ENCODE measurements at regions of chr12 and their contacts with region 1.

Region 1: GRCh38 chr12:85951823-85952222 is 77.7 kb downstream of the NTS start:
- DNase-seq: no peak
- H3K4me3 Mint-ChIP-seq: no peak overlapping the region
- H3K27ac Mint-ChIP-seq: no peak overlapping the region
- H3K4me1 Mint-ChIP-seq: no peaks in the 10 kb centered on the region
- H3K27me3 Mint-ChIP-seq: no peaks in the 10 kb centered on the region
- CTCF ChIP-seq: peak; percentile 61

Region 2: DNA sequence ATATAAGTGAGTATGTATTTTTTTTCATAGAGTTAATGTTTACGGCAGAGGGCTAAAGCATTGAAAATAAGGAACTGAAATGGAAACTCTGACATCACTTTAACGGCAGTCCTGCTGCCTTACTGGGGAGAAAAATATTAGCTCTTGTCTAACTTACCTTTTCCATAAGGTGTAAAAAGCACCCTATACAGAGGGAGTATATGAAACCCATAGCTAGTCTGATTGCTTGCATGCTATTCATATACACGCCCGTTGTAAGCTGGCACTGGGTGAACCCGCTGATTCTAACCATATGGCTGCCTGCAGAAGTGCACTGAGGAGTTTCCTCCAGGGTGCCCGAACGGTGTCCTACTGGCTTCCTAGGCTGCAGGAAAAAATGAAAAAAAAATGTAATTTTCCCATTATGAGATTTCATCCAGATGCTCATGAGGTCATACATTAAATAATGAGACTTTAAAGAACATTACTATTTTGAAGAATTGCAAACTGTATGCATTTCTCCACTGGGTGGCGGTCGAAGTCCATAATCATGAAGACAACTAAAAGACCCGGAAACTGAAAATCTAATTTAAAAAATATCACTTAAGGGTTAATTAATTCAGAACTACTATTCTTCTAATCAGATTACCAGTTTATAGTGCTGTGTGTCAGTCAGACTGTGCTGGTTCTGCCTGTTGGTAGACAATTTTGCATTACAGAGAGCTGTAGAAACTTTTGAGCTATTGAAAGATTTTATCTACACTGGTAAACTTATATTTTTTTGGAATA is 527.1 kb before region 1 on chr12:
- CTCF ChIA-PET with region 1: interaction called, 4 read pairs
- intact Hi-C with region 1: loop called (anchors 1 kb)
- DNase-seq: peak; percentile 51
- H3K4me3 Mint-ChIP-seq: no peak overlapping the region
- H3K27ac Mint-ChIP-seq: no peak overlapping the region
- H3K4me1 Mint-ChIP-seq: no peaks in the 10 kb centered on the region
- H3K27me3 Mint-ChIP-seq: no peaks in the 10 kb centered on the region
- CTCF ChIP-seq: peak; percentile 56

Region 3: DNA sequence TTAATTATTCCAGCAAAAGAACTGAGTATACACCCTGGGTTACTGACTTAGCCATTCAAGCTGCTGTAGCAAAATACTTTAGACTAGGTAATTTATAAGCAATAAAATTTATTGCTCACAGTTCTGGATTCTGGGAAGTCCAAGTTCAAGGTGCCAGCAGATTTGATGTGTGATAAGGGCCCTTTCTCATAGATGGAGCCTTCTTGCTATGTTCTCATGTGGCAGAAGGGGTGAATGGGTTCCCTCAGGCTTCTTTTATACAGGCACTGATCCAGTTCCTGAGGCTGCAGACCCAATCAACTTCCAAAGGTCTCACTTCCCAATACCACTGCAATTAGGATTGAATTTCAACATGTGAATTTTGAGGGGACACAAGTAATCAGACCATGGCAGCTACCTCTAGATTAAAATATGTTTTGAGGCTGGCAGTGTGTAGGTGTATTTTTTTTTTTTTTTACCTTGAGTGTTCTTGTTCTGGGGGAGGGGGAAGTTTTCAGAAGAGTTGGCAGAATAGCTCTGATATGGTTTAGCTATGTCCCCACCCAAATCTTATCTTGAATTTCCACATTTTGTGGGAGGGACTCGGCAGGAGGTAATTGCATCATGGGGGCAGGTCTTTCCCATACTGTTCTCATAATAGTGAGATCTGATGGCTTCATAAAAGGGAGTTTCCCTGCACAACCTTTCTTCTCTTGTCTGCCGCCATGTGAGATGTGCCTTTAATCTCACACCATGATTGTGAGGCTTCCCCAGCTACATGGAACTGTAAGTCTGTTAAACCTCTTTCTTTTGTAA is 293.8 kb before region 1 on chr12:
- CTCF ChIA-PET with region 1: no interaction called
- intact Hi-C with region 1: no loop called
- DNase-seq: no peak
- H3K4me3 Mint-ChIP-seq: no peak overlapping the region
- H3K27ac Mint-ChIP-seq: no peak overlapping the region
- H3K4me1 Mint-ChIP-seq: no peaks in the 10 kb centered on the region
- H3K27me3 Mint-ChIP-seq: no peaks in the 10 kb centered on the region
- CTCF ChIP-seq: no peak

Region 4: DNA sequence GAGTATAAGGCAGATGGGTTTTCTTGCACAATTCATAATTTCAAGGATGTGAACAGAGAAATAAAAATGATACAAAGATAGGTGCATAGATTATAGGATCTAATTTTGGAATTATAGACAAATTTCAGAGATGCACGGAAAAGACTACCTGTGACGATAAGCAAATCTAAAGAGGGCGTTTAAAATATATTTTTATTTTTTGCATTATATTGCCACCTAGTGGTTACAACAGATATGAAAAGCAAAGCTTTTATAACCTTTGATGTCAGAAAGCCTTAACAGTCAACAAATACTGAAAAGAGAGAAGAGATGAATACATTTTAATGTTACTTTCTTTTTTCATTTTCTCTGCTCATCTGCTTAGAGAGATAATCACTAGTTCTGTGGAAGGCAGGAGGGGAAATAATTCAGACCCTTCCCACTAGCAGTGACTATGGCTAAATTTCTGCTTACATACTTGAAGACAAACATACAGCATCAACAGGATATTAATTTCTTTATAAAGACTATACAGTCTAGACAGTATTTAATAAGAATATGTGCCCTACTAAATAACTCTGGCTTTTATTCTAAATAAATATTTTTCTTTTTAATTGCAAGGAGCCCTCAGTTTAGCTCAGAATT is 31.4 kb before region 1 on chr12:
- CTCF ChIA-PET with region 1: interaction called, 3 read pairs
- intact Hi-C with region 1: loop called (anchors 1 kb)
- DNase-seq: no peak
- H3K4me3 Mint-ChIP-seq: no peak overlapping the region
- H3K27ac Mint-ChIP-seq: no peak overlapping the region
- H3K4me1 Mint-ChIP-seq: no peaks in the 10 kb centered on the region
- H3K27me3 Mint-ChIP-seq: no peaks in the 10 kb centered on the region
- CTCF ChIP-seq: peak; percentile 45

Region 5: GRCh38 chr12:86015019-86015418 is 63.2 kb after region 1 on chr12:
- CTCF ChIA-PET with region 1: no interaction called
- intact Hi-C with region 1: no loop called
- DNase-seq: no peak
- H3K4me3 Mint-ChIP-seq: no peak overlapping the region
- H3K27ac Mint-ChIP-seq: no peak overlapping the region
- H3K4me1 Mint-ChIP-seq: no peaks in the 10 kb centered on the region
- H3K27me3 Mint-ChIP-seq: no peaks in the 10 kb centered on the region
- CTCF ChIP-seq: no peak

Region 6: DNA sequence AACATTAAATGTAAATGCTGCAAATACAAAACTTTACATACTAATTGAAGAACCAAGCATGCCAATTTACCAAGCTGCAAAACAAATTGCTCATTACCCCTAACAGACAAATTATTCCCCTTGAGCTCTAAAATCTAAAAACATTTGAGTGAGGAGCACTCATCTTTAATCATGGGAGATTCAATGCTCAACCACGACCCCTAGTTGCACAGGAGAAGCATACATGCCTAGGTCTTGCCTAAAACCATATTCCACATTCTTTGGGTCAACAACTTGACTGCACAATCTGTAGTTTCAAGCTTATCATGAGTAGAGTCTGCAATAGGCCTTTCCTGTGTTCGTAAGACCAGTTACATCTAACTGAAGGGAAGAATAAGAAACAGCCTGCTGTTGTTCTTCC is 234.6 kb after region 1 on chr12:
- CTCF ChIA-PET with region 1: no interaction called
- intact Hi-C with region 1: loop called (anchors 5 kb)
- DNase-seq: peak; percentile 14
- H3K4me3 Mint-ChIP-seq: no peak overlapping the region
- H3K27ac Mint-ChIP-seq: no peak overlapping the region
- H3K4me1 Mint-ChIP-seq: no peaks in the 10 kb centered on the region
- H3K27me3 Mint-ChIP-seq: no peaks in the 10 kb centered on the region
- CTCF ChIP-seq: no peak

Region 7: GRCh38 chr12:86249851-86250250 is 298.0 kb after region 1 on chr12:
- CTCF ChIA-PET with region 1: no interaction called
- intact Hi-C with region 1: loop called (anchors 5 kb)
- DNase-seq: no peak
- H3K4me3 Mint-ChIP-seq: no peak overlapping the region
- H3K27ac Mint-ChIP-seq: no peak overlapping the region
- H3K4me1 Mint-ChIP-seq: peaks cover 6% of the 10 kb centered on the region
- H3K27me3 Mint-ChIP-seq: no peaks in the 10 kb centered on the region
- CTCF ChIP-seq: no peak

Region 8: GRCh38 chr12:86727151-86727550 is 775.3 kb after region 1 on chr12:
- CTCF ChIA-PET with region 1: no interaction called
- intact Hi-C with region 1: loop called (anchors 10 kb)
- DNase-seq: no peak
- H3K4me3 Mint-ChIP-seq: no peak overlapping the region
- H3K27ac Mint-ChIP-seq: no peak overlapping the region
- H3K4me1 Mint-ChIP-seq: peaks cover 9% of the 10 kb centered on the region
- H3K27me3 Mint-ChIP-seq: no peaks in the 10 kb centered on the region
- CTCF ChIP-seq: no peak

Region 9: GRCh38 chr12:86914716-86915115 is 962.9 kb after region 1 on chr12:
- CTCF ChIA-PET with region 1: no interaction called
- intact Hi-C with region 1: loop called (anchors 5 kb)
- DNase-seq: peak; percentile 56
- H3K4me3 Mint-ChIP-seq: no peak overlapping the region
- H3K27ac Mint-ChIP-seq: no peak overlapping the region
- H3K4me1 Mint-ChIP-seq: no peaks in the 10 kb centered on the region
- H3K27me3 Mint-ChIP-seq: no peaks in the 10 kb centered on the region
- CTCF ChIP-seq: peak; percentile 44